Dorsolateral prefrontal cortex (tissue), 120 donors: ENCODE measurements at regions of chr11 and their contacts with region 1.

Region 1: DNA sequence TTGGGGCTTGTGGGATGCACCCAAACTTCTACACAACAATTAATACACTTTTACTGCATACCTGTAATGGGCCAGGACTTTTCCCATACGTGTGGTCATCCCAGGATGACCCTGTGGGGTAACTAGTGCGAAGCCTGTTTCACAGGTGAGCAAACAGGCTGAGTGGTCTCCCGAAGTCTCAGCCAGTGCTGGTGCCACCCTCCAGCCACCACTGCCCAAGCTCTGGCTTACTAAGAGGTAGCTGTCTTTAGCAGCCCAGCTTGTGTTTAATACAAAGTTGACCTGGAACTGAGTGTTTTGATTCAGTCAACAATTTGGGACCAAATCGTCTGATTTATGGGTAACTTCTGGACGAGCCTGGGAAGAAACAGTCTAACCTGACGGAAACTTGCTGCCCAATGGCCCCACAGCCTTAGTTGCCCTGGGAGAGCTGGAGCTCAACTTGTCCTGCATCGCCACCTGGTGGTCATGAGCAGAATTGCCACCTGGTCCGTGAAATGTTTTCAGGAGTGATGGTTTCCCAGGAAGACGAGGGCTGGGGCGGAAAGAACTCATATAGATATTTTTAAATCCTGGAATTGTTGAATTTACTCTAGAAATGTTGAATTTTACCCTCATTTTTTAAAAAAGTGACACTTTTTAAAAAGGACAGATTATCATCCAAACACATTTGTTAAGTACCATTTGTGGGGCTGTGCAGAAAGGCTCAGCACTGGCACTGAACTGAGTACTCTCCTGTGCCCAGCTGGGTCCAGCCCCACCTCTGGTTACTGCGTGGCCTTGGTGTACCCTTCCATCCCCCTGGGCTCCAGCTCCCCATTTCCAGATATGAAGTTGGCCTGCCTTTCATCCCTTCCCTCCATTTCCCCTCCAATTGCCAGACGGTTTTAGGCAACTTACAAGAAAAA is 95.5 kb upstream of the PARVA start:
- DNase-seq: peak; percentile 83 to 96 (median 92)
- H3K4me3 ChIP-seq: no peak overlapping the region
- H3K27ac ChIP-seq: no peak overlapping the region
- H3K27me3 ChIP-seq: peaks cover 0 to 9% (median 0%) of the 10 kb centered on the region in 45 donors
- CTCF ChIP-seq: peak; percentile 95 to 100 (median 99)

Region 2: GRCh38 chr11:11806586-11806985 is 475.2 kb before region 1 on chr11:
- intact Hi-C with region 1: loop called in 1 of 2 experiments (anchors 10 kb)
- DNase-seq: no peak
- H3K4me3 ChIP-seq: peak overlapping the region in 19 of 59 donors; percentile 0 to 39 (median 8)
- H3K27ac ChIP-seq: peak overlapping the region; percentile 14 to 99 (median 92)
- H3K27me3 ChIP-seq: no peaks in the 10 kb centered on the region
- CTCF ChIP-seq: peak in 6 of 56 donors; percentile 5 to 26 (median 14)

Region 3: DNA sequence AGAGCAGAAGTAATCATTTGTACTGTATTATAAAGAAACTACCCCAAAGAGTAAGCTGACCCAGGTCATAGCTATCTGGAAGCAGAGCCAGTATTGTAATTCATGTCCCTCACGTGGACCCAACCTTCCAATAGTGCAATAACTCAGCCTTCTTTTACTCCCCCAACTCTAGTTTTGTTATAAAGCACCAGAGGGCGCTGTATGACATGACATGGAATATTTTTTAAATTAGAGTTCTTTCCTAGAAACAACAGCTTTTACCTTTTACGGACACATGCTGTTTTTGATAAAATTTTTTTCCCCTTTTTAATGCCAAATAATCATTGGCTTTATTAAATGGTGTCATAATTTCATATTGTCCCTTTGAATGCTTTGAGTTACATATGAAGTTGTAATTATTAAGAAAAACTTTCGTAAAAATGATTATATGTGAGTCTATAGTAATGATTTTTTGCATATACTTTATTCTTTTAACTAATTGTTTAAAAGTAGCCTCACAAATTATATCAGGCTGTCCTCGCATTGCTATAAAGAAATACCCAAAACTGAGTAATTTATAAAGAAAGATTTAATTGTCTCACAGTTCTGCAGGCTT is 350.3 kb before region 1 on chr11:
- intact Hi-C with region 1: loop called (anchors 5 to 10 kb)
- DNase-seq: no peak
- H3K4me3 ChIP-seq: no peak overlapping the region
- H3K27ac ChIP-seq: peak overlapping the region in 2 of 59 donors; percentile 2 to 27
- H3K27me3 ChIP-seq: no peaks in the 10 kb centered on the region
- CTCF ChIP-seq: peak; percentile 43 to 92 (median 72)

Region 4: GRCh38 chr11:12052676-12053605 is 228.9 kb before region 1 on chr11:
- intact Hi-C with region 1: loop called in 1 of 2 experiments (anchors 2 kb)
- DNase-seq: peak in 5 of 10 donors; percentile 42 to 77 (median 48)
- H3K4me3 ChIP-seq: no peak overlapping the region
- H3K27ac ChIP-seq: peak overlapping the region in 6 of 59 donors; percentile 5 to 45 (median 16)
- H3K27me3 ChIP-seq: no peaks in the 10 kb centered on the region
- CTCF ChIP-seq: no peak

Region 5: GRCh38 chr11:12087075-12088004 is 194.5 kb before region 1 on chr11:
- intact Hi-C with region 1: loop called in 1 of 2 experiments (anchors 2 kb)
- DNase-seq: no peak
- H3K4me3 ChIP-seq: no peak overlapping the region
- H3K27ac ChIP-seq: peak overlapping the region in 52 of 59 donors; percentile 8 to 92 (median 67)
- H3K27me3 ChIP-seq: peaks cover 0 to 4% (median 0%) of the 10 kb centered on the region in 45 donors
- CTCF ChIP-seq: no peak